Activated B cell treated with CpG ODN at 0.5 μM for 24 hours (primary cell): ENCODE measurements at regions of chr4 and their contacts with region 1.

Region 1: DNA sequence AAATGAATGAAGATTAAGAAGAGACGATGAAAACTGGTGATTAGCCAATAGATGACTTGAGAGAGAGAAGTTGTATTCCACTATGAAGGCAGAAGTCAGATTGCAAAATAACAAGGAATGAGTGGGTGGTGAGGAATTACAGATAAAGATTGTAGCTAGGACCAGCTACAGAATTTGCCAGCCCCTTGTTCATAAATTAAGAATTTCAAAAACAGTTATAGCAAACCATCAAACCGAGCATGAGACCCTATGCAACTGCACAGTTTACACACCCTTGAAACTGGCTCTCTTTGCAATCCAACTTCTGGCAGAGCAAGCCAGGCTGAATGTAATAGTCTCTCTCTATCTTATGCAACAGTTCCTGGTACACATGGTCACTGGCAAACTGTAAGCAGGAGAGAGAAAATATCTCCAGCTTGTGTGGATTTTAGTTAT is 35.2 kb downstream of the STAP1 start:
- DNase-seq: no peak
- ATAC-seq: no peak
- H3K4me3 Mint-ChIP-seq: no peak overlapping the region
- H3K27ac Mint-ChIP-seq: peak overlapping the region; percentile 3
- H3K4me1 Mint-ChIP-seq: peaks cover 27% of the 10 kb centered on the region
- H3K27me3 Mint-ChIP-seq: no peaks in the 10 kb centered on the region
- CTCF ChIP-seq: no peak

Region 2: DNA sequence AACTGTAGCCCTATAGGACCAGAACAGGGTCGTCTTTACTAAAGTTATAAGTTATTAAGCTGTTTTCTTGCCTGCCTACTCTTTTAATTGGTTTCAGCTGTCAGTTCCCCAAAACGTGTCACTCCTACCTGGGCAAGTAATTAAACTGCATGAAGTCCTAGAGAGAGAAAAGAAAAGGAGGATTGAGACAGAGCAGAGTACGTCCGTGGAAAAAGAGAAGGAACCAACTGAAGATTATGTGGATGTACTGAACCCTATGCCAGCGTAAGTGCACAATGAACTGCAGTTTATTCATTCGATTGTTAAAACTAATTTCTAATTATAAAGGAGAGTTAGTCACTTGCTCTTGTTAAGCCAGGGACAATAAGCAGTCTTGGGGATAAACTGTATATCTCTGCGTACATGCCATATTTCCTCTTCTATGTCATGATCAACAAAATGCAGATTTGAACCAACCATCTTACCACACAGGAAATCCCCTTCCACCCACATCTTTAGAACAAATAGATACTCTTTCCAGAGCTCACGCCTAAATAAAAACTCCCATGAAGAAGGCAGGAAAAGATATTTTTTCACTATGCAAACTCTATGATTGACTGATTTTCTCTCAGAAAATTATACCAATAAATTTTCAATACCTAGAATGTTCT is 12.4 kb before region 1 on chr4:
- CTCF ChIA-PET with region 1: no interaction called
- POLR2A ChIA-PET with region 1: interaction called, 3 read pairs
- intact Hi-C with region 1: loop called (anchors 2 kb)
- DNase-seq: no peak
- ATAC-seq: peak; percentile 81
- H3K4me3 Mint-ChIP-seq: peak overlapping the region; percentile 55
- H3K27ac Mint-ChIP-seq: peak overlapping the region; percentile 83
- H3K4me1 Mint-ChIP-seq: peaks cover 46% of the 10 kb centered on the region
- H3K27me3 Mint-ChIP-seq: no peaks in the 10 kb centered on the region
- CTCF ChIP-seq: no peak

Region 3: GRCh38 chr4:68141852-68142251 is 548.1 kb after region 1 on chr4:
- CTCF ChIA-PET with region 1: no interaction called
- POLR2A ChIA-PET with region 1: no interaction called
- intact Hi-C with region 1: no loop called
- DNase-seq: no peak
- ATAC-seq: no peak
- H3K4me3 Mint-ChIP-seq: no peak overlapping the region
- H3K27ac Mint-ChIP-seq: no peak overlapping the region
- H3K4me1 Mint-ChIP-seq: no peaks in the 10 kb centered on the region
- H3K27me3 Mint-ChIP-seq: no peaks in the 10 kb centered on the region
- CTCF ChIP-seq: no peak